MCF 10A (cell line): ENCODE measurements at regions of chr1 and their contacts with region 1.

Region 1: GRCh38 chr1:6245086-6245868 is 1.3 kb downstream of the HES3 start:
- DNase-seq: peak; percentile 75
- H3K4me3 Mint-ChIP-seq: peak overlapping the region; percentile 10
- H3K27ac Mint-ChIP-seq: no peak overlapping the region
- H3K4me1 Mint-ChIP-seq: peaks cover 5% of the 10 kb centered on the region
- H3K27me3 Mint-ChIP-seq: peaks cover 30% of the 10 kb centered on the region
- CTCF ChIP-seq: peak; percentile 91

Region 2: GRCh38 chr1:6108937-6109614 is 136.2 kb before region 1 on chr1:
- CTCF ChIA-PET with region 1: interaction called, 14 read pairs
- POLR2A ChIA-PET with region 1: no interaction called
- intact Hi-C with region 1: loop called (anchors 1 kb)
- DNase-seq: peak; percentile 68
- H3K4me3 Mint-ChIP-seq: no peak overlapping the region
- H3K27ac Mint-ChIP-seq: no peak overlapping the region
- H3K4me1 Mint-ChIP-seq: no peaks in the 10 kb centered on the region
- H3K27me3 Mint-ChIP-seq: peaks cover 25% of the 10 kb centered on the region
- CTCF ChIP-seq: peak; percentile 88

Region 3: DNA sequence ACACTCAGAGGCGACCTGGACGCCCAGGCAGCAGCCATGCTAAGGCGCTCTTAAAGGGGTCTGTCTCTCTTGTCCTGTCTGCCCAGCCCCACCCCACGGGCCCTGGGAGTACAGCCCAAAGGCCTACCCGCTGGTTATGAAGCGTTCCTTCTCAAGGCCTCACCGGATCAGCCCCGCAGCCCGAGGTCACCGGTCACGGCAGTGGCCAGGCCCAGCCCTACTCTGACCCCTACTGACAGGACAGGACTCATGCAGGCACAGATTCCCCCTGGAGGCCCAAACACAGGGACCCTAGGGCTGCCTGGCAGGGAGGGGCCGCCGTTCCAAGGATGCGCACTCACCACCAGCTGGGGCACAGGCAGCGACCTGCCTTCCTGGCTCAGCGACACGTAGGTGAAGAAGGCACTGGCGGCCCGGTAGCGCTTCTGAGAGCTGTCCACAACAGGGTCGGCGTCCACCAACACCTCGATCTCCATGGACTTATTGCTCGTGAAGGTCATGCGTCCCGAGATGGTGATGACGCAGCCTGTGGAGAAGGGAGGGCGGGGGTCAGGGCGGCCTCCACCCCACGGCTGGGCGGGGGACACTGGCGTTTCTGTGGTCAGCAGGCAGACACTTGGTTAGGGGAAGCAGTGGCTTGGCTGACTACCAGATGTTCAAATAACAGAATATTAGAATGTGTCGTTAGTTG is 35.6 kb after region 1 on chr1:
- CTCF ChIA-PET with region 1: interaction called, 7 read pairs
- POLR2A ChIA-PET with region 1: no interaction called
- intact Hi-C with region 1: loop called (anchors 1 kb)
- DNase-seq: no peak
- H3K4me3 Mint-ChIP-seq: no peak overlapping the region
- H3K27ac Mint-ChIP-seq: no peak overlapping the region
- H3K4me1 Mint-ChIP-seq: no peaks in the 10 kb centered on the region
- H3K27me3 Mint-ChIP-seq: no peaks in the 10 kb centered on the region
- CTCF ChIP-seq: peak; percentile 16

Region 4: GRCh38 chr1:6353955-6354658 is 108.8 kb after region 1 on chr1:
- CTCF ChIA-PET with region 1: interaction called, 20 read pairs
- POLR2A ChIA-PET with region 1: no interaction called
- intact Hi-C with region 1: no loop called
- DNase-seq: peak; percentile 58
- H3K4me3 Mint-ChIP-seq: no peak overlapping the region
- H3K27ac Mint-ChIP-seq: peak overlapping the region; percentile 27
- H3K4me1 Mint-ChIP-seq: peaks cover 43% of the 10 kb centered on the region
- H3K27me3 Mint-ChIP-seq: no peaks in the 10 kb centered on the region
- CTCF ChIP-seq: no peak

Region 5: DNA sequence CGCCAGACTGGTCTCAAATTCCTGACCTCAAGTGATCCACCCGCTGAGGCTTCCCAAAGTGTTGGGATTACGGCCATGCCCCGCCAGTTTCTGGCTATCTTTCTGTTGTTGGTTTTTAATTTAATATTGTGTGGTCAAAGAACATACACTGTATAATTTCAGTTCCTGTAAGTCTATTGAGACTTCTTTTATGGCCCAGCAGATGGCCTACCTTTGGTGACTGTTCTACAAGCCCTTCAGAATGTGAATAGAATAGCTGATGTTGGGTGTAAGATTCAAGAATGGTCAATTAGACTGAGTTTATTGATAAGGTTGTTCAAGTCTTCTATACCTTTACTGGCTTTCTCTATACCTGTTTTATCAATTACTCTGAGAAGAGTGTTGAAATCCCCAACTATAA is 163.8 kb after region 1 on chr1:
- CTCF ChIA-PET with region 1: interaction called, 35 read pairs
- POLR2A ChIA-PET with region 1: no interaction called
- intact Hi-C with region 1: loop called (anchors 1 kb)
- DNase-seq: no peak
- H3K4me3 Mint-ChIP-seq: no peak overlapping the region
- H3K27ac Mint-ChIP-seq: no peak overlapping the region
- H3K4me1 Mint-ChIP-seq: peaks cover 11% of the 10 kb centered on the region
- H3K27me3 Mint-ChIP-seq: no peaks in the 10 kb centered on the region
- CTCF ChIP-seq: no peak

Region 6: DNA sequence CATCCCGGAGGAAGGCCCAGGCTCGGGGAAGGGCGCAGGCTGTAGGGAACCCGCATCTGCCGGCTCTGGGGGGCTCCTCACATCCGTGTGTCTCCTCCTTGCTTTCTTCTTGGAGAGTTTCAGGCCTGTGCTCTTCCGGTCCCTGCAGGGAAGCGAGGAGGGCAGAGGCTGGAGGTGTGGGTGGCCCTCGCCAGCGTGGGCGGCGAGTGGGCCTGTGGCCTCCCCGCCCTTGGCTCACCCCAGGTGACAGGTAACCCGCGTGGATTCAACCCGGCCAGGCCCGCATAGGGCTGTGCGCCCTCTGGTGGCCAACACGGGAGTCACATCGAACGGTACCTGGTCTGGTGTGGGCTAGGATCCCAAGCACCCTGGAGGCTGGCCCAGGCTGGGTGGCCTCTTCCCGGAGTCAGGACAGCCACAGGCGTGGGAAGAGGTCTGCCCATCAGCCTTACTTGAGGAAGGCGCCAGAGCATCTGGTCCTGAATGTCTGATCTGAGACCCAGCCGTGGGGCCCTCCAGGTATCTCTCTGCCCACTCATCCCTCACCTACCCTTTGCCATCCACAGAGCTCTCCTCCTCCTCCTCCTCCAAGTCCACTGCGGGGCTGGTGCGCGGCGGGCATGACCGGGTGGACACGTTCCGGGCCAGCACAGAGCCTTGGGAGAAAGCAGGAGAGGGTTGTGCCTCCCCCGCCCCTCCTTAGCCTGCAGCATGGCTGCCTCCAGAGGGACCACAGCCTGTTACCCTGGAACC is 230.3 kb after region 1 on chr1:
- CTCF ChIA-PET with region 1: interaction called, 6 read pairs
- POLR2A ChIA-PET with region 1: no interaction called
- intact Hi-C with region 1: loop called (anchors 2 kb)
- DNase-seq: peak; percentile 52
- H3K4me3 Mint-ChIP-seq: no peak overlapping the region
- H3K27ac Mint-ChIP-seq: no peak overlapping the region
- H3K4me1 Mint-ChIP-seq: peaks cover 13% of the 10 kb centered on the region
- H3K27me3 Mint-ChIP-seq: no peaks in the 10 kb centered on the region
- CTCF ChIP-seq: peak; percentile 90